ENCODE measurements at regions of chr3 and their contacts with region 1.

Region 1: DNA sequence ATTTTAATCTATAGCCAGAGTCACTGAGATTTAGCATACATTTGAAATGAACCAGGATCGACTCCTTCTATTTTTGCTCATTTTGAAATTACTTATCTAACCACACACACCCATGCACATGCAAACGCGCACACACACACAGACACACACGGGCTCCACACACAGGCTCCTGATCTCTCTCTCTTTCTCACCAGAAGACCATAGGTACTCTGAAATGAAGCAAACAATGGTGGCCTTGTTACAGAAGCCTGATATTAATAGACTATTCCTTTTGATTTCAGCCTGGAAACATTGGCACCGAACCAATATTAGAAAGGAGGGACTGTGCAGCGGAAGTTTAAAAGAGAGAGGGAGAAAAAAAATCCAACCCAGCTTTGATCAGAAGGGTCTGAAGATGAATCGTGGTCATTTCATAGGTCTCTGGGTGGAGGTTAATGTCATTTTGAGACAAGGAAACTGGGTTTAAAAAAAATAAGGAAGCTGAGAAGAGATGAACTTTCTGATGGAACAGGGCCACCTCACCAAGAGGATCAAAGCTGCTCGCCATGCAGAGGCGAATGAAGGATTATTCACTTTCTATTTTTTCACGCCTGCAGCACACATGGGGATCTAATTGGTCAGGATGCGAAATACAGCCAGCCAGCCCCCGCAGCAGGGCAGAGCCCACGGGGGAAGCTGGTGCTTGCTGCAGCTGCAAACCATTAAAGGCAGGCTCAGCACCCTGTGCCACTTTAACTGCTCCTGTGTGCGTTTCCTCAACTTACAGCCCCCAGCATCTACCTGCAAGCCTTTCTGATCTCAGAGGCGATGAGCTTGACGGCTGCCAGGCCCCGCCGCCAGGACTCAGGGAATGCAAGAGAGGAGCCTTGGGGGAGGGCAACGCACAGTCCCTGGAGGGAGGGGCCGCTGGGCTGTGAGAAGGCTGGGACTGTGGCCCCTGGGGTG is 88.8 kb downstream of the HES1 start:
- DNase-seq: no peak
- H3K4me3 ChIP-seq: no peak overlapping the region
- H3K27ac ChIP-seq: no peak overlapping the region
- H3K4me1 ChIP-seq: no peaks in the 10 kb centered on the region
- H3K27me3 ChIP-seq: no peaks in the 10 kb centered on the region
- CTCF ChIP-seq: no peak
- POLR2A ChIP-seq: no peak

Region 2: DNA sequence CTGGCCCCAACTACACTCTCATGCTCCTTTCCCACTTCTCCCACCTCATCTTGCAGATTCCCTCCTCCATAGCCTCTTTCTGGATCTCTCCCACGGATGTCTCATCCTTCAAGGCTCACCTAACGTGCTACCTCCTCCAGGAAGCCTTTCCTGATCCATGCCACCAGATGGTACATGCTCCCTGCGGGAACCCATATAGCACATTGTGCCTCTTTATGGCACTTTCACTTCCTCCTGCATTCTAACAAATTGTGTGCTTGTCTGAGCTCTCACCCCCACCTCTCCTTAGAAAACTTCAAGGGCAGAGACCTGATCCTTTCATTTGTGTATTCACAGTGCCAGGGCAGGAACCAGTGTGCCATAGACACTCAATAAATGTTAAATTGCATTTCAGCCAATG is 25.8 kb before region 1 on chr3:
- intact Hi-C with region 1: loop called (anchors 2 kb)
- DNase-seq: no peak
- H3K4me3 ChIP-seq: no peak overlapping the region
- H3K27ac ChIP-seq: no peak overlapping the region
- H3K4me1 ChIP-seq: peaks cover 5% of the 10 kb centered on the region
- H3K27me3 ChIP-seq: no peaks in the 10 kb centered on the region
- CTCF ChIP-seq: no peak
- POLR2A ChIP-seq: no peak